ENCODE measurements at regions of chr6 and their contacts with region 1.

Region 1: DNA sequence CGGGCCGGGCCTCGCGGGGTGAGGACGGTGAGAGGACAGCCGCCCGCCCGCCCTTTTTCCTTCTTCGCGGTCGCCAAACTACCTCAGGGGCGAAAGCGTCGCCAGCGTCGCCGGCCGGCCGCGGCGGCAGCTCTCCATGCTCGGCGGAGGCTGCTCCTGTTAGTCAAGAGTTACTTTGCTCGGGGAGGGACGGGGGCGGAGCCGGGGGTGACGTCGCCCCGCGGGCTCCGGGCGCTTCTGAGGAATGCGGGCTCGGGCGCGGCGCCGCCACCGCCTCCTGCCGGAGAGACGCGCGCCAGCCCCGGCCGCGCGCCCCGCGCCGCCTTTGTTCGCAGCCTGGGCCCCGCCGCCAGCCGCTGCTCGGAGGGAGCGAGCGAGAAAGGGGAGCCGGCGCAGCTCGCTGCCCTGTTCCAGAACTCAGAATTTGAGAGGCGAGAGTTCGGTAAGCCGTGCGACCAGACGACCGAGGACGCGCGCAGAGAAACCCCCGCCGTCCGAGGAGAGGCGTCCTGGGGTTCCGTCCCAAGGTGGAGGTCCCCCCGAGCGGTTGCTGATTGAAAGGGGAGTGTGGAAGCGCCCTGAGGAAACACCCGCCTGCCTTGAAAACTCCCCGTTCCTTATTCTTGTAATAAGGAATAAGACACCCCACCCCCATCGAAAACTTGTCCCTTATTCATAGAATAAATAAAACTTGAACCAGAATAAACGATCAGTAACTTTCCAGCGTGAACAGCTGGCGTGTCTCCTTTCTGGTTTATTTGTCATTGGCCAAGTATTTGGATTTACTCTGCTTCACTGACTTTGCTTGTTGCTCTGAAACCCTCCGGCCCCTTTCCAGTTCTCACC is at the start of gene PTPRK:
- DNase-seq: peak; percentile 50 to 87
- ATAC-seq: peak; percentile 85 to 87
- H3K4me3 ChIP-seq: peak within 1 kb of the TSS; percentile 95
- H3K27ac ChIP-seq: peak within 1 kb of the TSS; percentile 94 to 97
- H3K4me1 ChIP-seq: peaks cover 28% of the 10 kb centered on the region
- CTCF ChIP-seq: peak; percentile 50
- EP300 ChIP-seq: no peak
- POLR2A ChIP-seq: peak; percentile 81
- RAD21 ChIP-seq: peak in 1 of 2 experiments; percentile 55; a peak in 2 of 5 replicates
- polyA plus RNA-seq, gene PTPRK: 16.1 and 33.9 TPM in 2 replicates

Region 2: GRCh38 chr6:127855542-127856159 is 665.0 kb before region 1 on chr6:
- CTCF ChIA-PET with region 1: interaction called, 16 read pairs
- POLR2A ChIA-PET with region 1: interaction called, 7 read pairs
- DNase-seq: peak in 1 of 2 experiments; percentile 20
- ATAC-seq: peak; percentile 51 to 62; a peak in 1 of 6 replicates
- H3K4me3 ChIP-seq: no peak overlapping the region
- H3K27ac ChIP-seq: no peak overlapping the region
- H3K4me1 ChIP-seq: no peaks in the 10 kb centered on the region
- CTCF ChIP-seq: peak; percentile 53
- EP300 ChIP-seq: no peak
- POLR2A ChIP-seq: no peak
- RAD21 ChIP-seq: peak; percentile 71

Region 3: DNA sequence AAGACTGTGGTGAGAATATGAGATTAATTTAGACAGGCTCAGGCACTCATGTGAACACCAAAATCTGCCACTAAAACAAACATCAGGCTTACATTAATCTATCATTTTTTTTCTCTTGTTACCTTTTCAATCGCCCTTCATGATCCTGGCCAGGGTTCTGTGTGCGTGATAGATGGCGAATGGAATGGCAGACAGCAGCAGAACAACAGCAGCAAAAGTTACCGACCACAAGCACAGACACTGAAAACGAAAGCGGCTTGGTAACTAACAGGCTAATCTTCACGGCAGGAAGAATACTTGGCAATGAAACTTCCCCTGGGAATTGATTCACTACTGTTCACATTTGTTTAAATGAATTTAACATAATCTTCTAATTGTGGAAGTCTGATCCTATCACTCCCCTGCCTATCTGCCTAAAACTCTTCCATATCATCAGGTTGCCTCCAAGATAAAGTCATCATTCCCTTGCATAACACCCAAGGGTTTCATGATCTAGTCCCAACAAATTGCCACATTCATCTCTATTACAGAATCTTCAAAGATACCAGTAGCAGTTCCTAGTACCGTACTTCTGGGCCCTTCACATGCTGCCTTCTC is 29.0 kb before region 1 on chr6:
- CTCF ChIA-PET with region 1: no interaction called
- POLR2A ChIA-PET with region 1: no interaction called
- DNase-seq: no peak
- ATAC-seq: 0 out of 6 replicates have a peak, but pooled peaks of 1 of the 2 experiments have one; percentile 52
- H3K4me3 ChIP-seq: no peak overlapping the region
- H3K27ac ChIP-seq: 0 out of 6 replicates have a peak overlapping the region, but pooled peaks of 1 of the 2 experiments have one; percentile 35
- H3K4me1 ChIP-seq: peaks cover 26% of the 10 kb centered on the region
- CTCF ChIP-seq: no peak
- EP300 ChIP-seq: no peak
- POLR2A ChIP-seq: no peak
- RAD21 ChIP-seq: no peak

Region 4: DNA sequence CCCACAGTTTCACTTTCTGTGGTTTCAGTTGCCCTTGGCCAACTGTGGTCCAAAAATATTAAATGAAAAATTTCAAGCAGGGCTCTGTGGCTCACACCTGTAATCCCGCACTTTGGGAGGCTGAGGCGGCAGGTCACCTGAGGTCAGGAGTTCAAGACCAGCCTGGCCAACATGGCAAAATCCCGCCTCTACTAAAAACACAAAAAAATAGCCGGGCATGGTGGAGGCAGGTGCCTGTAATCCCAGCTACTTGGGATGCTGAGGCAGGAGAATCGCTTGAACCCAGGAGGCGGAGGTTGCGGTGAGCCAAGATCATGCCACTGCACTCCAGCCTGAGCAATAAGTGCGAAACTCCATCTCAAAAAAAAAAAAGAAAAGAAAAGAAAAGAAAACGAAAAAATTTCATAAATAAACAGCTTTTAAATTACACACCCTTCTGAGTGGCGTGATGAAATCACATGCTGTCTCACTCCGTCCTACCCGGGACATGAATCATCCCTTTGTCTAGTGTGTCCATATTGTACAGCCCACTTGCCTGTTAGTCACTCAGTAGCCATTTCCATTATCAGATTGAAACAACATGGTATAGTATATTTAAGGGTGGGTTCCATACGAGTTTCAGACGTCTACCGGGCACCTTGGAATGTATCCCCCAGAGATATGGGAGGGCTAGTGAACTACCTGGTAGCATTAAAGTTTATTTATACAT is 11.9 kb before region 1 on chr6:
- CTCF ChIA-PET with region 1: interaction called, 5 read pairs
- POLR2A ChIA-PET with region 1: interaction called, 10 read pairs
- DNase-seq: peak; percentile 67 to 86
- ATAC-seq: peak; percentile 89 to 93
- H3K4me3 ChIP-seq: peak overlapping the region; percentile 34
- H3K27ac ChIP-seq: peak overlapping the region; percentile 89 to 90
- H3K4me1 ChIP-seq: peaks cover 89% of the 10 kb centered on the region
- CTCF ChIP-seq: no peak
- EP300 ChIP-seq: peak in 1 of 2 experiments; percentile 37; a peak in 1 of 5 replicates
- POLR2A ChIP-seq: no peak
- RAD21 ChIP-seq: no peak

Region 5: DNA sequence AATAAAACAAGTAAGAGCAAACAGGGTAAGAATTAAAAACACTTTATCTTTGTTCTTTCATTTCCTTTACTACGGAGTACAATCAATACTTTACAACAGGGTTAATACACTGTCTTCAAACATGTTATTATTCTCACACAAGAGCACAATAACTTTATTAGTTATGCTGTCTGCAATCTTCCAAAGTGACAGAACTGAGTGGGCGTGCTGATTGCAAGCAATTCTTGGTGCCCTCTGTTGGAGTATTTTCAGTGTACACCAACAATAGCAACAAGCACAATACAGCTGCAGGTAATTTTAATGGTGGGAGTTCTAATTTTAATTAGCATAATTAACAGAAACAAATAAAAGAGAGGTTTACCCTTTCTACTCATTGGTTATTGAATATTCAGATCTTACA is 33.6 kb after region 1 on chr6:
- CTCF ChIA-PET with region 1: no interaction called
- POLR2A ChIA-PET with region 1: no interaction called
- DNase-seq: no peak
- ATAC-seq: no peak
- H3K4me3 ChIP-seq: no peak overlapping the region
- H3K27ac ChIP-seq: no peak overlapping the region
- H3K4me1 ChIP-seq: no peaks in the 10 kb centered on the region
- CTCF ChIP-seq: no peak
- EP300 ChIP-seq: no peak
- POLR2A ChIP-seq: no peak
- RAD21 ChIP-seq: peak in 1 of 2 experiments; percentile 3; a peak in 1 of 5 replicates

Region 6: GRCh38 chr6:129130959-129131681 is 610.5 kb after region 1 on chr6:
- CTCF ChIA-PET with region 1: no interaction called
- POLR2A ChIA-PET with region 1: no interaction called
- DNase-seq: no peak
- ATAC-seq: no peak
- H3K4me3 ChIP-seq: no peak overlapping the region
- H3K27ac ChIP-seq: no peak overlapping the region
- H3K4me1 ChIP-seq: no peaks in the 10 kb centered on the region
- CTCF ChIP-seq: no peak
- EP300 ChIP-seq: no peak
- POLR2A ChIP-seq: no peak
- RAD21 ChIP-seq: no peak